ENCODE measurements at regions of chr4 and their contacts with region 1.

Region 1: DNA sequence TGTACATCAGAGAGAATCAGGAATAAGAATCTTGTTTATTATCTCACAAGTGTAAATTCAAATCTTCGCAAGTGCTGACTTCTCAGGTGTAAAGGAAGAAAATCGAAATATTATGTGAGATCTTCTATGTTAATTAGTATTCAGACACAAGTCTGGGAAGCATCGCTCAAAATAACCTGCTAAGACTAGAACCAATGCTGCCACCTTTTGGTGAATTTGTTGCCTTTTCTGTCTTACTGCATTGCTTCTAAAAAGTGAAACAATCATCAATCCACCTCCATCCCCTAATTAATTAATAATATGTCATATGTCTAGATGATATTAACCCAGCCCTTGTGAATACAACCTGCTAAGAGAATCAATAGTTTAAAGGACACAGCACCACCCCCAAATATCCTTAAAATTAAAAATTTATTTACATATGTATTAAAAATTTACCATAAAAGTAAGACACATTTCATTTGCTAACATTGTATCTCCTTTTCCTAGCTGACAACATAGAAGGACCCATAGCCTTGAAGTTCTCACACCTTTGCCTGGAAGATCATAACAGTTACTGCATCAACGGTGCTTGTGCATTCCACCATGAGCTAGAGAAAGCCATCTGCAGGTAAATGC is 3.5 kb downstream of the EPGN start:
- DNase-seq: peak; percentile 22
- ATAC-seq: no peak
- H3K4me3 Mint-ChIP-seq: no peak overlapping the region
- H3K27ac Mint-ChIP-seq: no peak overlapping the region
- H3K4me1 Mint-ChIP-seq: peaks cover 14% of the 10 kb centered on the region
- H3K27me3 Mint-ChIP-seq: no peaks in the 10 kb centered on the region

Region 2: GRCh38 chr4:73662709-73663546 is 648.9 kb before region 1 on chr4:
- CTCF ChIA-PET with region 1: no interaction called
- POLR2A ChIA-PET with region 1: no interaction called
- intact Hi-C with region 1: loop called in 1 of 2 experiments (anchors 5 kb)
- DNase-seq: no peak
- ATAC-seq: peak; percentile 33
- H3K4me3 Mint-ChIP-seq: no peak overlapping the region
- H3K27ac Mint-ChIP-seq: no peak overlapping the region
- H3K4me1 Mint-ChIP-seq: peaks cover 3% of the 10 kb centered on the region
- H3K27me3 Mint-ChIP-seq: peaks cover 2% of the 10 kb centered on the region

Region 3: DNA sequence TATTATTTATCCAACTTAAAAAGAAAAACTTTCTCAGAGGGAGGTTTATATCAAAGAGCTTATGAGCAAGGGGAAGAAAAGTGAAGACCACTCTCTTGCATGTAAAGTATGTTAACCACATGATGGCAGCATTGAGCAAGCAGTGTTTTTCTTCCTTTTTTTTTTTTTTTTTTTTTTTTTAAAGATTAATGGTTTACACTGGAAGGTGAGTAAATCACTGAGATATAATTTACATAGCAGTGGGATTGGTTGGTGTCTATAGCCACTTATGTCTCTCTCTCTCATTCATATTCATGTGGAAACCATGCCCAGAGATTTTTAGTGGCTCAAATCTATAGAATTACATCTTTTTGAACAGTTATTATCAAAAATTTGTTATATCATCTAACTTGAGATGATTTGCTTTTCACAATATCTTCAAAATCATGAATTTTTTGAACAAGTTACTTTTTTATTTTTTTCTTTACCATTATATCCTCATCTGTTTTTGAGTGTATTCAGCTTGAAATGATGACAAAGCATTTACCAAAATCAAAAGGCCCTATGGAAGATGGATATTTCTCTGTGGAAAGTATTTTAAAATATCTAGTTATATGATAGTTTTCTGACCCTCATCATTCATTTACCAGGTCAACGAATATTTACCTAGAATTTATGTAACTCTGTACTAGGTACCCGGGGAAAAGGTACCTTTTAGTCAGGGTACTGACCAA is 122.3 kb before region 1 on chr4:
- CTCF ChIA-PET with region 1: interaction called, 5 read pairs
- POLR2A ChIA-PET with region 1: no interaction called
- intact Hi-C with region 1: loop called (anchors 1 kb)
- DNase-seq: no peak
- ATAC-seq: peak; percentile 44
- H3K4me3 Mint-ChIP-seq: no peak overlapping the region
- H3K27ac Mint-ChIP-seq: no peak overlapping the region
- H3K4me1 Mint-ChIP-seq: no peaks in the 10 kb centered on the region
- H3K27me3 Mint-ChIP-seq: no peaks in the 10 kb centered on the region

Region 4: DNA sequence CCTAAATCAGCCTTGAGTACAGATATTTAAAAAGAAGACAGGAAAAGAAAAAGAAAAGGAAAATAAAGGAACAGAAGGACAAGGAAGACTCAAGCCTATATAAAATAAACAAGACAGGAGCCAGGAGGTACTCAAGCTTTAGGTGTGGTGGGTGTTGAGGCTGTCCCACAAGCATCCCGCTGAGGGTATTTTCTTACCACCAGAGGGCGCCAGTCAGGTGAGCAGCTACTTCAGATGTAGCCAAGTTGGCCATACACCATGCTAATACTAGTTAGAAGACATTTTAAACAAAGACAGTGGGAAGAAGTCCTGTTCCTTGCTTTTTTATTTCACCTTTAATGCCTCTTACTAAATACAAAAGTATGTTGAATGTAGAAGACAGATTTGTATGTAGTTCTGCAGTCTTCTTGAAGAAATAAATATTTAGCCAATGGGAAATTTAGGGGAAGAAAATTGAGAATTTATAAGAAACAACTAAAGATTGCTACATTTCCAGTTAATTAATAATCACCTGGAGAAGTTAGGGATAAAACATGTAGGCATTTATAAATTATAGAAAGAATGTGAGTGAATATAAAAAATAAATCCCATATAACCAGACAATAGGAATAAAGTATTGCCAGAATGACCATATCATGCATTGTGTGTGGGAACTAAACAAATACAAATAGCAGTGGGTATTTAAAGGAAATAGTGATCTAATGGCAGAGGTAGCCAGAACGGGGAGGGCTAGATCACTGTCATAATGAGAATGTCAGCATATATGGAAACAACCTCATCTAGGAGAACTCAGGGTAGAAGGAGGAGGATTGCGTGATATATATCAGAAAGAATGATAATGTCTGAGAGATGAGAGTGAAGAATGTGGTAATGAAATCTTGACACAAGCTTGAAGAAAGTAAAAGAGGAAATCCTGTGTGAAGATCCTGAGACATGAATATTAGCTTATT is 82.8 kb before region 1 on chr4:
- CTCF ChIA-PET with region 1: interaction called, 23 read pairs
- POLR2A ChIA-PET with region 1: no interaction called
- intact Hi-C with region 1: loop called (anchors 1 kb)
- DNase-seq: peak; percentile 87
- ATAC-seq: peak; percentile 85
- H3K4me3 Mint-ChIP-seq: no peak overlapping the region
- H3K27ac Mint-ChIP-seq: no peak overlapping the region
- H3K4me1 Mint-ChIP-seq: peaks cover 8% of the 10 kb centered on the region
- H3K27me3 Mint-ChIP-seq: no peaks in the 10 kb centered on the region

Region 5: GRCh38 chr4:74283614-74284013 is 28.2 kb before region 1 on chr4:
- CTCF ChIA-PET with region 1: no interaction called
- POLR2A ChIA-PET with region 1: no interaction called
- intact Hi-C with region 1: no loop called
- DNase-seq: no peak
- ATAC-seq: no peak
- H3K4me3 Mint-ChIP-seq: no peak overlapping the region
- H3K27ac Mint-ChIP-seq: no peak overlapping the region
- H3K4me1 Mint-ChIP-seq: no peaks in the 10 kb centered on the region
- H3K27me3 Mint-ChIP-seq: no peaks in the 10 kb centered on the region

Measured in activated CD4-positive, alpha-beta T cell treated with anti-CD3 and anti-CD28 coated beads for 36 hours (primary cell).